OCI-LY7 (cell line): ENCODE measurements at regions of chr12 and their contacts with region 1.

Region 1: GRCh38 chr12:121793838-121794533 is 498 bp upstream of the RHOF start:
- DNase-seq: peak; percentile 96
- H3K4me3 ChIP-seq: peak overlapping the region; percentile 76
- H3K27ac ChIP-seq: peak overlapping the region; percentile 63
- H3K4me1 ChIP-seq: peaks cover 59% of the 10 kb centered on the region
- CTCF ChIP-seq: peak; percentile 99

Region 2: GRCh38 chr12:121536899-121537813 is 256.8 kb before region 1 on chr12:
- CTCF ChIA-PET with region 1: no interaction called
- POLR2A ChIA-PET with region 1: no interaction called
- intact Hi-C with region 1: loop called (anchors 5 kb)
- DNase-seq: peak; percentile 89
- H3K4me3 ChIP-seq: peak overlapping the region; percentile 73
- H3K27ac ChIP-seq: peak overlapping the region; percentile 93
- H3K4me1 ChIP-seq: peaks cover 48% of the 10 kb centered on the region
- CTCF ChIP-seq: 0 out of 2 replicates have a peak, but pooled peaks have one; percentile 14

Region 3: DNA sequence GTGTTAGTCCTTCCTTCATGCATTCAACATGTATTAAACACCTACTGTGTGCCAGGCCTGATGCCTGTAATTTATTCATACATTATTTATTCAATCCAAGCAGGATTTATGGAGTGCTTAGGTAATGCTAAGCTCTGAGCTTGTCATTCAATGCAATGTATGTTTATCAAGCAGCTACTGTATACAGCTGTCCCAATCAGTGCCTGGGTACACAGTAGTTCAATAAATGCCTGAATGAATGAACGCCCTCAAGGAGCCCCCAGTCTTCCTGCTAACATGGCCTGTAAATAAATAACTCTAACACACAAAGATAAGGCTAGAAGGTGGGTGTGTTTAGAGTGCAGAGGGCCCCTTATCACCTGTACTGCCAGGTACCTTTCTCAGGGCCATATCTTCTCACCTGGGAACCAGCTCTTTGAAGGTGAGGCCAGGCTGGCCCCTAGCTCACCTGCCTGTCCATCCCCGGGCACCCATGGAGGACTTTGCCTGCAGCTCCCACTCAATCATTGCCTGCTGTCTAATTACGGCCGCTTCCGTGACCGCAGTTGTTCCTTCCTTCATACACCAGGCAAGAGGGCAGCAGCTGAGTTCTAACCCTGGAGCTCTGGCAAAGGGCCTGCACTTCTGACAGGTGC is 193.2 kb before region 1 on chr12:
- CTCF ChIA-PET with region 1: no interaction called
- POLR2A ChIA-PET with region 1: no interaction called
- intact Hi-C with region 1: no loop called
- DNase-seq: no peak
- H3K4me3 ChIP-seq: no peak overlapping the region
- H3K27ac ChIP-seq: no peak overlapping the region
- H3K4me1 ChIP-seq: no peaks in the 10 kb centered on the region
- CTCF ChIP-seq: no peak

Region 4: GRCh38 chr12:121712461-121713256 is 81.3 kb before region 1 on chr12 and contains the start of gene TMEM120B:
- CTCF ChIA-PET with region 1: interaction called, 3 read pairs
- POLR2A ChIA-PET with region 1: interaction called, 6 read pairs
- intact Hi-C with region 1: loop called (anchors 5 kb)
- DNase-seq: peak; percentile 84
- H3K4me3 ChIP-seq: peak within 1 kb of the TSS; percentile 85
- H3K27ac ChIP-seq: no peak within 1 kb of the TSS
- H3K4me1 ChIP-seq: peaks cover 40% of the 10 kb centered on the region
- CTCF ChIP-seq: peak; percentile 54
- total RNA-seq, gene TMEM120B: 9.3 and 12.4 TPM in 2 replicates

Region 5: GRCh38 chr12:121781998-121782979 is 11.7 kb before region 1 on chr12:
- CTCF ChIA-PET with region 1: interaction called, 13 read pairs
- POLR2A ChIA-PET with region 1: interaction called, 9 read pairs
- intact Hi-C with region 1: no loop called
- DNase-seq: peak; percentile 48
- H3K4me3 ChIP-seq: peak overlapping the region; percentile 20
- H3K27ac ChIP-seq: peak overlapping the region; percentile 61
- H3K4me1 ChIP-seq: peaks cover 38% of the 10 kb centered on the region
- CTCF ChIP-seq: no peak

Region 6: GRCh38 chr12:121888478-121889266 is 94.7 kb after region 1 on chr12 and contains the start of gene PSMD9:
- CTCF ChIA-PET with region 1: interaction called, 8 read pairs
- POLR2A ChIA-PET with region 1: interaction called, 5 read pairs
- intact Hi-C with region 1: loop called (anchors 1 kb)
- DNase-seq: peak; percentile 99
- H3K4me3 ChIP-seq: peak within 1 kb of the TSS; percentile 84
- H3K27ac ChIP-seq: peak within 1 kb of the TSS; percentile 86
- H3K4me1 ChIP-seq: peaks cover 39% of the 10 kb centered on the region
- CTCF ChIP-seq: peak; percentile 83
- total RNA-seq, gene PSMD9: 135 and 142 TPM in 2 replicates